Activated CD4-positive, alpha-beta memory T cell treated with anti-CD3 and anti-CD28 coated beads for 36 hours (primary cell): ENCODE measurements at regions of chr3 and their contacts with region 1.

Region 1: DNA sequence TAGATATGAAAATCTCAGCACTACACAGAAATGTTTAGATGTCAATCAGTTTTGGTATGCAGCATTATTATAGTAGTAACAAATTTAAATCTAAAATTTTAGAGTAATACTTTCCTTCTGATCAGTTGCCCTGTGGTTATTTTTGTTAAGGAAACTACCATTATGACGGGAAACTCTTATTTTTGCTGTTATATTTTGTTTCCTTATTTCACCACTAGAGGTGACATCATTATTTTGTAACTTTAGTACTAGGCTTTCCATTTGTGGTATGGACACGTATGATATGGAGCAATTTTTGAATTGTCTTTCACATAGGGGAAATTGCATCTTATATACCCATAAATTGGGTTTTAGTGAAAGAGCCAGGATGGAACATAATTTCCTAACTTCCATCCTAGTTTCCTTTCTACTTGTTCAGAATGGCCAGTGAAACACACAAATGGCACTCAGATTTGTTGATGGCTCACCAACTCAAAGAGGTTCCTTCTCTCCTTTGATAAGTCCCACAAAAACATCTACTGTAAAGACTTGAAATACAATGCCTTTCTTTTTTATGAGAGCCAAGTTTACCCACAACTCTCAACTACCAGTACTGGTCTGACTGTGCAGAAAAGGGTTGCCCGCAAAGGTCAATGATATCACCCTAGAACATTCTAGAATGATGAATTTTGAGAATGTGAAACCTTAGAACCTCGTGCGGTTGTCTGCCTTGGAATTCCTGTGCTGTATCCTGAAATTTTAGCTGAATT is 19.4 kb upstream of the PPP4R2 start:
- DNase-seq: peak; percentile 57
- H3K4me3 Mint-ChIP-seq: peak overlapping the region; percentile 20
- H3K27ac Mint-ChIP-seq: peak overlapping the region; percentile 83
- H3K4me1 Mint-ChIP-seq: peaks cover 28% of the 10 kb centered on the region
- H3K27me3 Mint-ChIP-seq: peaks cover 2% of the 10 kb centered on the region

Region 2: DNA sequence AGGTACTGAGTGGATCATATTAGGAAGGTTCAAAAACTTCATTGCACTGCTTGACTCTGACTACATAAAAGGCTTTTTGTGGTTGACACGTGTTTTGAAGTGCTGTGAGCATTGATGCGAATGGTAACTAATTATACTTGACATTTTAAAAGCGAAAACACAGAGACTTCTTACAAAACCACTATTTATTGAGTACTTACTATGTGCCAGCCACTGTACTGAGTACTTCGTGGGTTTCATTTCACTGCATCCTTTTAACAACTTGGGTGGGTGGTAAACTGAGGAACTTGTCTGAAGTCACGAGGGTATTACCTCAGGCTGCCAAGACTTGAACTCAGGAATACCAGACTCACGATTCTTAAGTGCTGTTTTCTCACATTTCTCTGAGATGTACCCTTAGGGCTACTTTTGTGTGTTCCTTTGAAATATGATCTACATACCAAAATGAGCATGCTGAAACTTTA is 25.9 kb before region 1 on chr3:
- CTCF ChIA-PET with region 1: no interaction called
- POLR2A ChIA-PET with region 1: no interaction called
- intact Hi-C with region 1: loop called (anchors 1 kb)
- DNase-seq: no peak
- H3K4me3 Mint-ChIP-seq: no peak overlapping the region
- H3K27ac Mint-ChIP-seq: no peak overlapping the region
- H3K4me1 Mint-ChIP-seq: peaks cover 12% of the 10 kb centered on the region
- H3K27me3 Mint-ChIP-seq: peaks cover 2% of the 10 kb centered on the region

Region 3: GRCh38 chr3:72960812-72961518 is 16.3 kb before region 1 on chr3:
- CTCF ChIA-PET with region 1: no interaction called
- POLR2A ChIA-PET with region 1: interaction called, 5 read pairs
- intact Hi-C with region 1: loop called (anchors 1 kb)
- DNase-seq: peak; percentile 55
- H3K4me3 Mint-ChIP-seq: no peak overlapping the region
- H3K27ac Mint-ChIP-seq: peak overlapping the region; percentile 35
- H3K4me1 Mint-ChIP-seq: peaks cover 41% of the 10 kb centered on the region
- H3K27me3 Mint-ChIP-seq: no peaks in the 10 kb centered on the region

Region 4: DNA sequence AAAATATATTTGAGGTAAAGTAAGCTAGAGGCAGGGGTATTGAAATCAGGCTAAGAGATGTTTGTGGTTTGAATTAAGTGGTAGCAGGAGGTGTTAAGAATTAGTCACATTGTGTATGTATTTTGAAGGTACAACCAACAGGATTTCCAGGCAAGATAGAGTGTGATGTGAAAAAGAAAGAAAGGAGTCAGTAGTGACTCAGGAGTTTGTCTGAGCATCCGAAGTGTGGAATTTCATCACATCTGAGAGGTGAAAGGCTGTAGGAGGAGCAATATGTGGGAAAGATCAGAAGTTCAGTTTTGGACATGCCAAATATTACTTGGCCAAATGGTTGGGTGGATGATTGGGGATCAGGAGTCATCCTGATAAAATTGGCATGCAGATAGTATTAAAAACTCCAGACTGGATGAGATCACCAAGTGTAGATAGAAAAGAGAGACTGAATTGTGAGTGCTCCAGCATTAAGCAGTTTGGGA is 52.1 kb after region 1 on chr3:
- CTCF ChIA-PET with region 1: no interaction called
- POLR2A ChIA-PET with region 1: no interaction called
- intact Hi-C with region 1: loop called (anchors 1 kb)
- DNase-seq: no peak
- H3K4me3 Mint-ChIP-seq: peak overlapping the region; percentile 0
- H3K27ac Mint-ChIP-seq: peak overlapping the region; percentile 33
- H3K4me1 Mint-ChIP-seq: peaks cover 90% of the 10 kb centered on the region
- H3K27me3 Mint-ChIP-seq: no peaks in the 10 kb centered on the region

Region 5: DNA sequence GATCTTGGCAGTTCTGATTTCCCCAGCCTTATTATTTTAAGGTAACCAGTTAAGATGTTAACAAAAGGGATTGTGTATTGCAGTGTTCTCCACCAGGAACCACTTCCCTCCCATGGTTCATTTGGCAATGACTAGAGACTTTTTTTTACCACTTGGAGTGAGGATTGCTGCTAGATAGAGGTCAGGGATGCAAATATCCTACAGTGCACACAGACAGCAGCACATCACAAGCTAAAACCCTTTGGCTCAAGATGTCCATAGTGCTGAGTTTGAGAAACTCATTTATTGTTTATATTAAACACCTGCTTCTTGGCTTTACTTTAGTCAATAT is 60.1 kb after region 1 on chr3:
- CTCF ChIA-PET with region 1: no interaction called
- POLR2A ChIA-PET with region 1: no interaction called
- intact Hi-C with region 1: loop called (anchors 1 kb)
- DNase-seq: no peak
- H3K4me3 Mint-ChIP-seq: no peak overlapping the region
- H3K27ac Mint-ChIP-seq: peak overlapping the region; percentile 62
- H3K4me1 Mint-ChIP-seq: peaks cover 91% of the 10 kb centered on the region
- H3K27me3 Mint-ChIP-seq: no peaks in the 10 kb centered on the region

Region 6: DNA sequence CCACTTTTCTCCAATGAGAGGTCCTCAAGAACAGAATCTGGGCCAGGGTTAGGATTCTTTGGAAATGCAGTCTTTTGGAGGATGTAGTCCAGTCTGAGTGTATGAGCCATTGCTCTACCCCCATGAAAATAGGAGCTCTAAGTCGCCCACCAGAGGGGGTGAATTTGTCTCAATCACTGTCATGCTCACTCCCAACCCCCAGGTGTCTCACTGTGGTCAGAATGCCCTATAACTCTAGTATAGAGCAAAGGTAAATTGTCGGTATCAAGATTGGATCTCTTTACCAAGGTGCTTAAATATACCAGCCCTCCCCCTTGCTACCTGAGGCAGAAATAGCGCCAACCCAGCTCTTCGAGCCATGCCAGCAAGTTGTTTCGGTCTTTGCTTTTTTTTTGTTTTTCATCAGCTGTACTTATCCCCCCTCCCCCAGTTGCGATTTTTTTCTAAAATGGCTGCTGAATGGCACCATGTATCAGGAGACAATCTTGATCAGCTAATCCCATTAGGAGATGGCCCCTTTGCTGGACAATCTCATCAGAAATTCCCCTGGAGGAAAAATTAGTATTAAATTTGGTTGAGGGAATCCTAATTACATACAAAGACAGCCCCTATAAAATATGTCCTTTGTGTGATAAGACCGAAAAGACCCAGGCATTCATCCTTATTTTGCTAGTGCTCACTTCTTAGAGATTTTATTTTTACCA is 215.0 kb after region 1 on chr3:
- CTCF ChIA-PET with region 1: no interaction called
- POLR2A ChIA-PET with region 1: no interaction called
- intact Hi-C with region 1: no loop called
- DNase-seq: no peak
- H3K4me3 Mint-ChIP-seq: no peak overlapping the region
- H3K27ac Mint-ChIP-seq: no peak overlapping the region
- H3K4me1 Mint-ChIP-seq: no peaks in the 10 kb centered on the region
- H3K27me3 Mint-ChIP-seq: no peaks in the 10 kb centered on the region